ENCODE measurements at regions of chr3 and their contacts with region 1.

Region 1: DNA sequence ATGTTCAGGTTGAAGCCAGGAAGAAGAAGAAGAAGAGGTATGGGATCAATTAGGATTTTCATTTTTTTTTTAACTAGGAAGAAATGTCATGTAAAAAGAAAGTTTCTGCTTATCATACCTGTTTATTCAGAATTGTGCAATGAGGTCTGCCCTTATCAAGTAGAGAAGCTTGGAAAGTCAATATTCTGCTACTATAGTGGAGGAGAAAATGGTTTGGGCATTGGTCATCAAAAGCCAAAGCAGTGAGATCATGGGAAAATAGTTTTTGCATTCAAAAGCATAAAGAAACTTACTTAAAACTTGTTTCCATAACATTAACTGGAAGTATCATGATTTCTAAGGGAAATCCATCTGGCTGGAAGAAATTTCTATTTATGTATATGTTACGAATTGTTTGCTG is 1239.2 kb downstream of the NSUN3 start:
- DNase-seq: peak; percentile 18
- H3K4me3 Mint-ChIP-seq: peak overlapping the region; percentile 44
- H3K27ac Mint-ChIP-seq: peak overlapping the region; percentile 81
- H3K4me1 Mint-ChIP-seq: peaks cover 50% of the 10 kb centered on the region
- H3K27me3 Mint-ChIP-seq: no peaks in the 10 kb centered on the region
- CTCF ChIP-seq: no peak

Region 2: GRCh38 chr3:94735354-94735753 is 566.7 kb before region 1 on chr3:
- CTCF ChIA-PET with region 1: no interaction called
- intact Hi-C with region 1: no loop called
- DNase-seq: no peak
- H3K4me3 Mint-ChIP-seq: no peak overlapping the region
- H3K27ac Mint-ChIP-seq: no peak overlapping the region
- H3K4me1 Mint-ChIP-seq: no peaks in the 10 kb centered on the region
- H3K27me3 Mint-ChIP-seq: no peaks in the 10 kb centered on the region
- CTCF ChIP-seq: no peak

Region 3: GRCh38 chr3:94978084-94978483 is 324.0 kb before region 1 on chr3:
- CTCF ChIA-PET with region 1: no interaction called
- intact Hi-C with region 1: no loop called
- DNase-seq: no peak
- H3K4me3 Mint-ChIP-seq: no peak overlapping the region
- H3K27ac Mint-ChIP-seq: no peak overlapping the region
- H3K4me1 Mint-ChIP-seq: no peaks in the 10 kb centered on the region
- H3K27me3 Mint-ChIP-seq: no peaks in the 10 kb centered on the region
- CTCF ChIP-seq: no peak

Region 4: GRCh38 chr3:95329619-95330018 is 27.6 kb after region 1 on chr3:
- CTCF ChIA-PET with region 1: no interaction called
- intact Hi-C with region 1: no loop called
- DNase-seq: no peak
- H3K4me3 Mint-ChIP-seq: no peak overlapping the region
- H3K27ac Mint-ChIP-seq: no peak overlapping the region
- H3K4me1 Mint-ChIP-seq: peaks cover 8% of the 10 kb centered on the region
- H3K27me3 Mint-ChIP-seq: no peaks in the 10 kb centered on the region
- CTCF ChIP-seq: no peak

Region 5: GRCh38 chr3:95341314-95341713 is 39.3 kb after region 1 on chr3:
- CTCF ChIA-PET with region 1: no interaction called
- intact Hi-C with region 1: loop called (anchors 5 kb)
- DNase-seq: peak; percentile 51
- H3K4me3 Mint-ChIP-seq: no peak overlapping the region
- H3K27ac Mint-ChIP-seq: no peak overlapping the region
- H3K4me1 Mint-ChIP-seq: peaks cover 46% of the 10 kb centered on the region
- H3K27me3 Mint-ChIP-seq: no peaks in the 10 kb centered on the region
- CTCF ChIP-seq: no peak

Measured in Calu3 (cell line).